ENCODE measurements at regions of chrX and their contacts with region 1.

Region 1: DNA sequence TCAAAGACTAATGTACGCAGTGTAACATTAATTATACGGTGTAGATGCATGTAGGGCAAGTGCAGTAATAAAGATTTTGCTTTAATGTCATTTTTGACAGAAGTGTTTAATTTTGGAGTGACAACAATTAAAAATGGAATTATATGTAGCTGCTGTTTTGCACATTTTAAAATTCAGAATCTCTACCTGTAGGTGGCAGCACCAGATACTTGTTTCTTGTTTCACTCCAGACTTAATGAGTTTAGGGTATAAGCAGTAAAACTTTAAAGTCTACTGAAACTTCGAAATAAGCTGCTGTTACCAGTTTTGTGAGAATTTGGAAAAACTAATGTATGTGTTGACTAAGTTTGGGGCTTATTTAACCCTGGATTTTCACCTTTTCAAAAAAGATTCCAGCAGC is 144.9 kb downstream of the POLA1 start:
- DNase-seq: no peak
- H3K4me3 ChIP-seq: no peak overlapping the region
- H3K27ac ChIP-seq: no peak overlapping the region
- H3K4me1 ChIP-seq: no peaks in the 10 kb centered on the region
- H3K27me3 ChIP-seq: no peaks in the 10 kb centered on the region
- CTCF ChIP-seq: peak; percentile 27 to 38 (median 33)
- POLR2A ChIP-seq: no peak

Region 2: DNA sequence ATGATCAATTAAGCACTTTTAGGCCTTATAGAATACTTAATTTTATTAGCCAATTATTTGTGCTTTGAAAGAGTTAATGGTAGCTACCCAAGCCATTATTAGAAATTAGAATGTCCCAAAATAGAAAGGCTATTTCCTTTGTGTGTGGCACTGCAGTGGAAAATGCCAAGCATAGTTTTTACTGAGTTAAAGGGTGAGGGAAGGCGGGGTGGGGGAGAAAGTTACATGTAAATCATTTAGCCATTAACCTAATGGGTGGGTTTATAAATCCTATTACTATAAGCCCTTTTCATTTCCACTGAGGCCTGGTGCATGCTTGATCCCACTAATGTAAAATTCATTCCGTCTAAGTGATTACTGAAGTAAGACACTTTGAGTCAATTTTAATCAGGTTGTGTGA is 39.1 kb before region 1 on chrX:
- intact Hi-C with region 1: loop called (anchors 2 kb)
- DNase-seq: no peak
- H3K4me3 ChIP-seq: no peak overlapping the region
- H3K27ac ChIP-seq: no peak overlapping the region
- H3K4me1 ChIP-seq: no peaks in the 10 kb centered on the region
- H3K27me3 ChIP-seq: no peaks in the 10 kb centered on the region
- CTCF ChIP-seq: no peak
- POLR2A ChIP-seq: no peak